ENCODE measurements at regions of chr5 and their contacts with region 1.

Region 1: GRCh38 chr5:54517174-54518092 is at the start of gene SNX18:
- DNase-seq: peak; percentile 96
- ATAC-seq: peak; percentile 96
- H3K4me3 ChIP-seq: peak within 1 kb of the TSS; percentile 96
- H3K27ac ChIP-seq: peak within 1 kb of the TSS; percentile 93
- H3K4me1 ChIP-seq: peaks cover 23% of the 10 kb centered on the region
- H3K27me3 ChIP-seq: no peaks in the 10 kb centered on the region
- CTCF ChIP-seq: peak; percentile 94
- total RNA-seq, gene SNX18: 35.4 TPM

Region 2: DNA sequence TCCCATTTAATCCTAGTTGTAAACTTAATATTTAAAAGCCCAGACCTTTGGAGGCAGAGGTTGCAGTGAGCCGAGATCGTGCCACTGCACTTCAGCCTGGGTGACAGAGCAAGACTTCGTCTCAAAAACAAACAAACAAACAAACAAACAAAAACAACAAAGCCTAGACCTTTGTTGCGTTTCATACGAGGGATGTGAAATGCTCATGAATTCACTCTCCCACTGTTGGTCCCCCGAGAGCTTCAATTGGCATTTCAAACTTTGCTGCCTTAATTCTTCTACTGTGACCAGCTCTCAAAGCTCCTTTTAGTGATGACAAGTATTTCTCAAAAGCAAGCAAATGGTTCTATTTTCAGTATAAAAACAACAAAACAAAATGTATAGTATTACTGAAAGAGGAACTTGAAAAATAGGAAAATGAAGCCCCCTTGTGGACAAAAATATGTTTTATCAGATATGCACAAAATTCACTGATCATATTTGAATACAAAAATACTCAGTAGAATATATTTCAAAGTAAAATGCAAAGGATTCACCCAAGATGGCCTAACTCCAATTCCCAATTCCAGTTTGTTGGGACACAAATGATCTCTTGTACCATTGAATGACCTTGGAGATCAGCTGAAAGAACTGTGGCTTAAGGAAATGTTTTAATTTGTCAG is 327.6 kb after region 1 on chr5:
- intact Hi-C with region 1: loop called (anchors 2 kb)
- DNase-seq: no peak
- ATAC-seq: peak; percentile 43
- H3K4me3 ChIP-seq: peak overlapping the region; percentile 29
- H3K27ac ChIP-seq: no peak overlapping the region
- H3K4me1 ChIP-seq: no peaks in the 10 kb centered on the region
- H3K27me3 ChIP-seq: no peaks in the 10 kb centered on the region
- CTCF ChIP-seq: peak; percentile 73

Measured in upper lobe of right lung (tissue), 1 donor.